ENCODE measurements at regions of chr11 and their contacts with region 1.

Region 1: GRCh38 chr11:60913793-60914632 is at the start of gene TMEM109:
- DNase-seq: peak; percentile 90 to 92 (median 91)
- H3K4me3 ChIP-seq: peak within 1 kb of the TSS; percentile 79 to 96
- H3K4me3 Mint-ChIP-seq: peak within 1 kb of the TSS; percentile 92 to 100 (median 98)
- H3K27ac ChIP-seq: peak within 1 kb of the TSS; percentile 96
- H3K27ac Mint-ChIP-seq: peak within 1 kb of the TSS; percentile 87 to 99 (median 98)
- H3K4me1 ChIP-seq: peaks cover 47% of the 10 kb centered on the region
- H3K4me1 Mint-ChIP-seq: peaks cover 31 to 65% (median 44%) of the 10 kb centered on the region in 4 donors
- H3K27me3 ChIP-seq: no peaks in the 10 kb centered on the region
- H3K27me3 Mint-ChIP-seq: no peaks in the 10 kb centered on the region
- total RNA-seq, gene TMEM109: 66.9 to 68.0 TPM

Region 2: DNA sequence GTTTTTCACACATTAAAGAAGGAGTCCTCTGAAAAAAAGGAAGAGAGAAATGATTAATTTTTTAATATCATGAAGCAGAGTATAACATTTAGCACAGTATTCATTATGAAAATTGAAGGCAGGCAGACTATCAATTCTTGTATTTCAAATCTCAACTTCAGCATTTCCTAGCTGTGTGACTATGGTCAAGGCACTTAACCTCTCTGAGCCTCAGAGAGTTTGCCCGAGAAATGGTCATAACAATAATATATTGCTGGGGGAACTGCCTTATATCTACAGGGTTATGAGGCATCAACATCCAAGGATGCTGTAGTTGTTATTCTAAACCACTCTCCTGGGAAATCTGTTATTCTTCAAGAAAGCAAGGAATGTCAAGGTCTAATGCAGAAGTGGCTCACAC is 188.4 kb before region 1 on chr11:
- CTCF ChIA-PET with region 1: no interaction called
- POLR2A ChIA-PET with region 1: no interaction called
- intact Hi-C with region 1: no loop called
- DNase-seq: no peak
- H3K4me3 ChIP-seq: no peak overlapping the region
- H3K4me3 Mint-ChIP-seq: no peak overlapping the region
- H3K27ac ChIP-seq: no peak overlapping the region
- H3K27ac Mint-ChIP-seq: no peak overlapping the region
- H3K4me1 ChIP-seq: no peaks in the 10 kb centered on the region
- H3K4me1 Mint-ChIP-seq: no peaks in the 10 kb centered on the region
- H3K27me3 ChIP-seq: no peaks in the 10 kb centered on the region
- H3K27me3 Mint-ChIP-seq: peaks cover 17 to 31% of the 10 kb centered on the region in 2 donors

Region 3: GRCh38 chr11:60951899-60952741 is 38.1 kb after region 1 on chr11 and contains the start of gene SLC15A3:
- CTCF ChIA-PET with region 1: interaction called, 3 read pairs
- POLR2A ChIA-PET with region 1: interaction called, 3 read pairs
- intact Hi-C with region 1: loop called (anchors 2 kb)
- DNase-seq: peak in 2 of 5 donors; percentile 17 to 53
- H3K4me3 ChIP-seq: no peak within 1 kb of the TSS
- H3K4me3 Mint-ChIP-seq: peak within 1 kb of the TSS; percentile 72 to 88 (median 79)
- H3K27ac ChIP-seq: no peak within 1 kb of the TSS
- H3K27ac Mint-ChIP-seq: peak within 1 kb of the TSS; percentile 29 to 85 (median 66)
- H3K4me1 ChIP-seq: peaks cover 9% of the 10 kb centered on the region
- H3K4me1 Mint-ChIP-seq: peaks cover 6 to 20% (median 11%) of the 10 kb centered on the region in 4 donors
- H3K27me3 ChIP-seq: peaks cover 9% of the 10 kb centered on the region
- H3K27me3 Mint-ChIP-seq: peaks cover 5 to 13% of the 10 kb centered on the region in 2 donors
- total RNA-seq, gene SLC15A3: 4.6 to 5.4 TPM

Region 4: GRCh38 chr11:61173456-61173855 is 259.4 kb after region 1 on chr11:
- CTCF ChIA-PET with region 1: no interaction called
- POLR2A ChIA-PET with region 1: no interaction called
- intact Hi-C with region 1: no loop called
- DNase-seq: no peak
- H3K4me3 ChIP-seq: no peak overlapping the region
- H3K4me3 Mint-ChIP-seq: no peak overlapping the region
- H3K27ac ChIP-seq: no peak overlapping the region
- H3K27ac Mint-ChIP-seq: peak overlapping the region in 1 of 7 donors; percentile 36
- H3K4me1 ChIP-seq: peaks cover 16% of the 10 kb centered on the region
- H3K4me1 Mint-ChIP-seq: peaks cover 10 to 19% (median 15%) of the 10 kb centered on the region in 4 donors
- H3K27me3 ChIP-seq: no peaks in the 10 kb centered on the region
- H3K27me3 Mint-ChIP-seq: peaks cover 0 to 1% of the 10 kb centered on the region in 2 donors

Region 5: DNA sequence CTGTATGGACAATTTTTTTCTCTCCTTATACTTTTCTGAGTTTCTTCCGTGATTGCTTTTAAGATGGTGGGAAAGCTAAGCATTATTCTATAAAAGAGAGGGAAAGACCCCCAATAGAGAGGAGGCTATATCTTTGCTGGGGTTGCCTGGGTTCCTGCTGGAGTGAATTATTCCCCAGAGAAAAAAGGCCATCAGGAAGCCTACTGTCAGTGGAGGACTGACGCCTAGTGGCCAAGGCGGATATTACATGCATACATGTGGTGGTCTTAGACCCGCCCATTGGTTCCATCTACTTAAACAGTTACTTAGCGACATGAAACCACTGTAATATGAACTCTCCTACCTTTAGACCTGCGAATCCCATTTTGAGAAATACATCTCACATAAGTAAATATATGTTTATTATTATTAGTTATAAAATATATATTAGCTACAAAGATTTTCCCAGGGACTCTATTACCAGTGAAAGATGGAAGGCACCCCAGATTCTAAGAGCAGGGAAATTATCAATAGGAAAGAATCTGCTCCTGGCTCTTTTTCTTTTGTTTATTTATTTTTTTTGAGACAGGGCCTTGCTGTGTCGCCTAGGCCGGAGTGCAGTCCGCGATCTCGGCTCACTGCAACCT is 273.6 kb after region 1 on chr11:
- CTCF ChIA-PET with region 1: interaction called, 11 read pairs
- POLR2A ChIA-PET with region 1: no interaction called
- intact Hi-C with region 1: loop called (anchors 1 kb)
- DNase-seq: peak; percentile 66 to 73 (median 71)
- H3K4me3 ChIP-seq: no peak overlapping the region
- H3K4me3 Mint-ChIP-seq: no peak overlapping the region
- H3K27ac ChIP-seq: no peak overlapping the region
- H3K27ac Mint-ChIP-seq: no peak overlapping the region
- H3K4me1 ChIP-seq: no peaks in the 10 kb centered on the region
- H3K4me1 Mint-ChIP-seq: peaks cover 0 to 3% (median 0%) of the 10 kb centered on the region in 4 donors
- H3K27me3 ChIP-seq: no peaks in the 10 kb centered on the region
- H3K27me3 Mint-ChIP-seq: peaks cover 3 to 9% of the 10 kb centered on the region in 2 donors